Natural killer cell (primary cell): ENCODE measurements at regions of chr3 and their contacts with region 1.

Region 1: DNA sequence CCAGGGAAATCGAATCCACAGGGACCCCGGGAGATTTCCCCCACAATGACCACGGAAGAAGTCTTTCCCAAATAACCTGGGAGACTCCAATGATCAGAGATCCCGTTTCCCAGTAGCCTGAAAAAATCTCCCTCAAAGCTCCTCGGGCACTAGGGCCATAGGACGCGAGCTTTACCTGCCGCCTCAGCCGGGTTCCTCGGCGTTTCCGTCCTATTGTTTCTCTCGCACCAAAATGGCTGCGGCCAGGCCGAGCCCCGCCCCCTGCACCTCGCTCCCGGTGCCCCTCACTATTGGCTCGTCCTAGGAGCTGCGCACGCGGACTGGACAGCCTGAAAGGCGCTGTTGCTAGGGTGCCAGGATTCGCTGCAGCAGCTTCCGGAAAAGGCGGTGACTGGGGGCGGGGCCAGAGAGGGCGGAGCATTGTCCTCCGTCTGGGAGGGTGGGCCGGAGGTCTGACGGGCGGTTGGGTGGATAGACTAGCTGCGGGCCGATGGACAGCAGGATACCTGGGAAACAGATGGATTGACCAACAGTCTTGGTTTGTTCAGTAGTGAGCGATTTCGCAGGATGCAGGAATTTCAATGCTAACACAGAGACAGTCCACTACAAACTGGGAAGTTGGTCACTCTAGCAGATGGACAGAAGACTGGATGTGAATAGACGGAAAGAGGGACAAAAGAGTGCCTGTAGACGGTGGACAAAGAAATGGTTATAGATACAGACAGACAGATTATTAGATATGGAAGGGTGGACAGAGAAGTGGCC is at the start of gene IP6K2:
- DNase-seq: peak; percentile 98 to 99
- ATAC-seq: peak; percentile 98 to 100 (median 99)
- H3K4me3 ChIP-seq: peak within 1 kb of the TSS; percentile 97
- H3K4me3 Mint-ChIP-seq: peak within 1 kb of the TSS; percentile 98
- H3K27ac ChIP-seq: peak within 1 kb of the TSS; percentile 82
- H3K27ac Mint-ChIP-seq: peak within 1 kb of the TSS; percentile 96
- H3K4me1 ChIP-seq: peaks cover 37% of the 10 kb centered on the region
- H3K4me1 Mint-ChIP-seq: peaks cover 37 to 41% of the 10 kb centered on the region in 2 donors
- H3K27me3 ChIP-seq: no peaks in the 10 kb centered on the region
- H3K27me3 Mint-ChIP-seq: peaks cover 0 to 5% of the 10 kb centered on the region in 2 donors
- CTCF ChIP-seq: no peak
- total RNA-seq, gene IP6K2: 140 to 151 (median 148) TPM

Region 2: GRCh38 chr3:48663415-48664312 is 53.5 kb before region 1 on chr3:
- intact Hi-C with region 1: loop called (anchors 2 kb)
- DNase-seq: peak; percentile 89 to 92
- ATAC-seq: peak; percentile 82 to 90 (median 86)
- H3K4me3 ChIP-seq: peak overlapping the region; percentile 51
- H3K4me3 Mint-ChIP-seq: peak overlapping the region; percentile 86
- H3K27ac ChIP-seq: no peak overlapping the region
- H3K27ac Mint-ChIP-seq: peak overlapping the region; percentile 80 to 93
- H3K4me1 ChIP-seq: peaks cover 34% of the 10 kb centered on the region
- H3K4me1 Mint-ChIP-seq: peaks cover 10 to 17% of the 10 kb centered on the region in 2 donors
- H3K27me3 ChIP-seq: peaks cover 16% of the 10 kb centered on the region
- H3K27me3 Mint-ChIP-seq: peaks cover 7 to 14% of the 10 kb centered on the region in 2 donors
- CTCF ChIP-seq: peak; percentile 81

Region 3: GRCh38 chr3:48685602-48686511 is 31.3 kb before region 1 on chr3 and contains the start of gene NCKIPSD:
- intact Hi-C with region 1: loop called (anchors 2 kb)
- DNase-seq: peak; percentile 90 to 95
- ATAC-seq: peak; percentile 93 to 98 (median 96)
- H3K4me3 ChIP-seq: peak within 1 kb of the TSS; percentile 65
- H3K4me3 Mint-ChIP-seq: peak within 1 kb of the TSS; percentile 93
- H3K27ac ChIP-seq: peak within 1 kb of the TSS; percentile 59
- H3K27ac Mint-ChIP-seq: peak within 1 kb of the TSS; percentile 78 to 93
- H3K4me1 ChIP-seq: peaks cover 23% of the 10 kb centered on the region
- H3K4me1 Mint-ChIP-seq: peaks cover 26 to 34% of the 10 kb centered on the region in 2 donors
- H3K27me3 ChIP-seq: no peaks in the 10 kb centered on the region
- H3K27me3 Mint-ChIP-seq: no peaks in the 10 kb centered on the region
- CTCF ChIP-seq: peak; percentile 95
- total RNA-seq, gene NCKIPSD: 12.2 to 14.1 (median 12.8) TPM

Region 4: DNA sequence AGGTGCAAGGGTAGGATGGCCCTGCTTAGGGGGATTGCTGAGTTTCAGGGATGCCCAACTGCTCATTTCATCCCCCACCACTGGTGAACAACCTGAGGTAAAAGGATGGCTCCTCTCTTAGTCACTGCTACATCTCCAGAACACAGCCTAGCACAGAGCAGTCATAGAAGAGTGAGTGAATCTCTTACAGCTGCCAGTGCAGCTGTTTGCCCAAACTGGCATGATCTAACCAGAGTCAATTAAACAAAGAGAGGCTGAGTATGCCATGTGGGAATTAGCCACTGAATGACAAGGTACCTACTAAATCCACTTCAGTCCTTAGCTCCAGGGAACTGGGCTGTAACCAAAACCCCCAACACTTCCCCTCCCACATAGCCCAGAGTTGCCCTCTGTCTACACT is 24.6 kb before region 1 on chr3:
- intact Hi-C with region 1: loop called (anchors 2 kb)
- DNase-seq: no peak
- ATAC-seq: no peak
- H3K4me3 ChIP-seq: no peak overlapping the region
- H3K4me3 Mint-ChIP-seq: no peak overlapping the region
- H3K27ac ChIP-seq: no peak overlapping the region
- H3K27ac Mint-ChIP-seq: peak overlapping the region in 1 of 2 donors; percentile 52
- H3K4me1 ChIP-seq: no peaks in the 10 kb centered on the region
- H3K4me1 Mint-ChIP-seq: peaks cover 6 to 12% of the 10 kb centered on the region in 2 donors
- H3K27me3 ChIP-seq: no peaks in the 10 kb centered on the region
- H3K27me3 Mint-ChIP-seq: no peaks in the 10 kb centered on the region
- CTCF ChIP-seq: no peak

Region 5: DNA sequence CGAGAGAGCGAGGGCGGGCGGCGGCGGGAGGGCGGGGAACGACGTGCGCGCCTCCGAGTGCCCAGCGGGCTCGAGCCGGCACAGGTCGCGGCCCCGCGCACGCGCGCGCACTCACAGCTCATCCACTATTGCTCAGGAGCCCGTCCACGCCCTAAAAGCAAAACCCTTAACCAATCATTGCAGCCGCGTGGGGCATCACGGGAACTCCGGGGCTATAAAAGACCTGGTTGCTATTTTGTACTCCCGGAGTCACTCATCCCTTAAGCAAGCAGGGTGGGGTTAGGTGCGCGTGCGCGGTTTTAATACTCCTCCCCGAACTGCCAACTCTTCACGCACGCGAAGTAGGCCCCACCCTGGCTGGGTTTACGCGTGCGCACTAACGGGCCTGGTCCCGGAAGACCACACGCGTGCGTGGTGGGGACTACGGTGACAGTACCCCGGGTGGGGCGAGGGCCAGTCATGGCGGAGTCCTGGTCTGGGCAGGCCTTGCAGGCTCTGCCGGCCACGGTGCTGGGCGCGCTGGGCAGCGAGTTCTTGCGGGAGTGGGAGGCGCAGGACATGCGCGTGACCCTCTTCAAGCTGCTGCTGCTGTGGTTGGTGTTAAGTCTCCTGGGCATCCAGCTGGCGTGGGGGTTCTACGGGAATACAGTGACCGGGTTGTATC is 694.9 kb after region 1 on chr3 and contains the starts of genes RHOA and TCTA:
- intact Hi-C with region 1: no loop called
- DNase-seq: peak; percentile 98 to 100
- ATAC-seq: peak; percentile 79 to 91 (median 84)
- H3K4me3 ChIP-seq: peak within 1 kb of the TSS; percentile 77
- H3K4me3 Mint-ChIP-seq: peak within 1 kb of the TSS; percentile 91
- H3K27ac ChIP-seq: peak within 1 kb of the TSS; percentile 90
- H3K27ac Mint-ChIP-seq: peak within 1 kb of the TSS; percentile 97 to 99
- H3K4me1 ChIP-seq: peaks cover 68% of the 10 kb centered on the region
- H3K4me1 Mint-ChIP-seq: peaks cover 66 to 70% of the 10 kb centered on the region in 2 donors
- H3K27me3 ChIP-seq: no peaks in the 10 kb centered on the region
- H3K27me3 Mint-ChIP-seq: no peaks in the 10 kb centered on the region
- CTCF ChIP-seq: no peak
- total RNA-seq, gene RHOA: 342 to 372 (median 370) TPM
- total RNA-seq, gene TCTA: 35.4 to 40.7 (median 36.7) TPM

Region 6: GRCh38 chr3:49867871-49868321 is 1150.7 kb after region 1 on chr3:
- intact Hi-C with region 1: no loop called
- DNase-seq: peak in 1 of 2 donors; percentile 45
- ATAC-seq: no peak
- H3K4me3 ChIP-seq: no peak overlapping the region
- H3K4me3 Mint-ChIP-seq: no peak overlapping the region
- H3K27ac ChIP-seq: no peak overlapping the region
- H3K27ac Mint-ChIP-seq: no peak overlapping the region
- H3K4me1 ChIP-seq: peaks cover 12% of the 10 kb centered on the region
- H3K4me1 Mint-ChIP-seq: no peaks in the 10 kb centered on the region
- H3K27me3 ChIP-seq: peaks cover 13% of the 10 kb centered on the region
- H3K27me3 Mint-ChIP-seq: peaks cover 31 to 33% of the 10 kb centered on the region in 2 donors
- CTCF ChIP-seq: no peak